GM10248 (cell line): ENCODE measurements at regions of chr19 and their contacts with region 1.

Region 1: GRCh38 chr19:55632463-55632834 is 8.1 kb upstream of the ZNF784 start:
- DNase-seq: peak; percentile 66
- CTCF ChIP-seq: peak; percentile 88

Region 2: DNA sequence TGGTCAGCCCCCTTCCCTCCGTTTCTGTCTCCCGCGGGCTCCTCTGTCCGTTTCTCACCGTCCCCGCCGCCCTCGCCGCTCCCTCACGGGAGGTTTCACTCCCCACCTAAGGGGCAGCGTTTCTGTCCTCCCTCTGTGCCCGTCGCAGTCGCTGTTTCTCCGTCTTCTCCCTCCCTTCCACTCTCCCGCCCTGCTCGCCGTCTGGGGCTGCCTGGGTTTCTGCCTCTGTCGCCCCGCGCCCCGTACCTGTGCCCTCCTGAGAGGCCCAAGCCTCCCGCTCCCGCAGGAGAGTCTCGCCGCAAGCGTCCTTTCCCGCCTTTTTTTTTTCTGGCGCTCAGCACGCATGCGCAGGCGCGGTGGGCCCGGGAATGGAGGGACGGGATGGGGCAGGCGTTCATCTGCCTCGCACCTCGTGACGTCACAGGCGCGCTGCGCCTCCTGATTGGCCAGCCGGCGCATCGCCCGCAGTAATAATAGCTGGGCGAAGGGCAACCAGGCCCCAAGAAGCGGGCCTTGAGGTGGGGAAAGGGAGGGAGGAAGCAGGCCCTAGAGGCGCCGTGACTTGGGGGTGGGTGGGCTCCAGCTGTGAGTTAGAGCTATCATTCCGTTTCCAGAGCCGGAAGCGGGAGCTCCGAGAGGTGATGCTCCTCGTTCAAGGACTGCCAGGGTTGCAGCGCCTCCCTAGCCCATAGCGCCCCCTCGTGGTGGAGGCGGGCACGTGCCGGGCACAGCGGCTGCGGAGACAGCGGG is 128.8 kb before region 1 on chr19:
- CTCF ChIA-PET with region 1: interaction called, 23 read pairs
- POLR2A ChIA-PET with region 1: no interaction called
- DNase-seq: peak; percentile 99
- CTCF ChIP-seq: peak; percentile 97

Region 3: DNA sequence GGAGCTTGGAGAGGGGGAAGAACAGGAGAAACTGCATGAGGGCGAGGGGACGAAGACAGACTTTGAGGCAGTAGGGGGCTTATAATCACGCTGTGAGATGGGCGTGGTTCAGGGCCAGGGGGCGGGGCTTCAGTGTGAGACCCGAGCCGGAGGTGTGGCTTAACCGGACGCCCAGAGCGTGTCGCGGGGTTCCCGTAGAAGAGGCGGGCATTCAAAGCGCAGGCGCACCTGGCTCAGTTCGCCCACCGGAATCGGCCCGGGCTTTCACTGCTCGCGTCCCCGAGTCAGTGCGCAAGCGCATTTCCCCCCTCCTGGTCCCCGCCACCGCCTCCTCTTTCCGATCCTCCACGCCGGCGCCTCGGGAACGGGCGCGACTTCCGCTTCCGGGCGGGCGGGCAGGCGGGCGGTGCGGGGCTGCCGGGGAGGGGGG is 27.2 kb before region 1 on chr19:
- CTCF ChIA-PET with region 1: interaction called, 30 read pairs
- POLR2A ChIA-PET with region 1: interaction called, 7 read pairs
- DNase-seq: peak; percentile 96
- CTCF ChIP-seq: no peak

Region 4: GRCh38 chr19:55643348-55644176 is 11.1 kb after region 1 on chr19 and contains the start of gene ZNF581:
- CTCF ChIA-PET with region 1: interaction called, 84 read pairs
- POLR2A ChIA-PET with region 1: interaction called, 8 read pairs
- DNase-seq: peak; percentile 80
- CTCF ChIP-seq: no peak

Region 5: DNA sequence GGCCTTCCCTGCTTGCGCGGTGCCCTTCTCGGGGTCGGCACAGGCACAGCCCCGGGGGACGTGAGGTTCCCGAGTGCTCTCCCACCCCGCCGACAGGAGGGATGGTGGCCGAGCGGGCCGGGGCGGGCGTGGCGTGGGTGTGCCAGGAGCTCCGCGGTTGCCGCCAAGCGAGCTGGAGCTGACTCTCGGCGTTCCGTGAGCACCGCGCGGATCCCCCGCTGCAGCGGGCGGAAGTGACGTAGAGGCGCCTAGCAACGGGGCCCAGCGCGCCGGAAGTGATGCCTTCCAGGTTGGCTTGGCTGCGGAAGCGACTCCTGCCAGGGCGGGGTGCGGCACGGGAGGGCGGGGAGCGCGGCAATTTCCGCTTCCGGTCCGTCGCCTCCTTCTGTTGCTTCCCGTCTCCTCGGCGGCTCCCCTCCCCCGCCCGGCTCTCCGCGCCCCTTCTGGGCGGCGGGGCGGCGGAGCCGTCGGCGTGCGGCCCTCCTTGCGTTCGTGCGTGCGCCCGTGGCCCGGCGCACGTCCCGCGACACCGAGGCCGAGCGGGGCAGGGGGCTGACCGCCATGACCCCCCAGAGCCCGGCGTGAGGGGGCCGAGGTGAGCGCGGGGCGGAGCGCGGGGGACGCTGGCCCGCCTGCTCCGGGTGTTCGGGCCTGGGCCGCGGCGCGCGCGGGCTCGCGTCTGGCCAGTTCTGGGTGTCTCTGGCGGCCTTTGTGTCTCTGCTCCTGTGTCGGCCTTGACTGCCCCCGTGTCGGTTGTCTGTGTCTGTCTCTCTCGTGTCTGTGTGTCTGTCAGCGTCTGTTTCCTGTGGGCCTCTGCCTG is 42.6 kb after region 1 on chr19 and contains the start of gene EPN1:
- CTCF ChIA-PET with region 1: interaction called, 16 read pairs
- POLR2A ChIA-PET with region 1: no interaction called
- DNase-seq: peak; percentile 99
- CTCF ChIP-seq: no peak

Region 6: GRCh38 chr19:55801416-55801815 is 169.0 kb after region 1 on chr19:
- CTCF ChIA-PET with region 1: no interaction called
- POLR2A ChIA-PET with region 1: no interaction called
- DNase-seq: no peak
- CTCF ChIP-seq: no peak

Region 7: DNA sequence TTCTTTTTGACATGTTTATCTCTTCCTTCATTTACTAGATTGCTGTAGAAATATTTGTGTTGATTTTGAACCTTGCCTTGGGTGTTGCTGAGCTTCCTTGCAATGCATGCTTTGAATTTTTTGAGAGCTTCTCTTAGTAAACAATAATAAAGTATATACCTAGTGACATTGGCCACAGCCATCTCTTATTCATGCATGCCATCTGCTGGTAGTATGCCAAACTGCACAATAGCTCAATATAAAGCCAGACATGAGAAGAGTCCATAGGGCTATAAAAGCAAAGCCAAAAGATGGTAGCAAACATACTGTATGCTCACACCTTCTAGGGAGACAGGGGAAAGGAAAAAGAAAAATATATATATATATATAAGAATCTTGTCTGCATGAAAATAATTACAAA is 701.1 kb after region 1 on chr19:
- CTCF ChIA-PET with region 1: interaction called, 16 read pairs
- POLR2A ChIA-PET with region 1: no interaction called
- DNase-seq: peak; percentile 50
- CTCF ChIP-seq: peak; percentile 81